Activated CD4-positive, alpha-beta memory T cell treated with anti-CD3 and anti-CD28 coated beads, Interleukin-2, amount 10 ng/mL, durations not matched to agents 7 days and 5 days (primary cell): ENCODE measurements at regions of chr14 and their contacts with region 1.

Region 1: GRCh38 chr14:67359775-67360648 is at the starts of genes ATP6V1D and EIF2S1:
- DNase-seq: peak; percentile 100
- H3K4me3 Mint-ChIP-seq: peak within 1 kb of the TSS; percentile 99
- H3K27ac Mint-ChIP-seq: peak within 1 kb of the TSS; percentile 97
- H3K4me1 Mint-ChIP-seq: peaks cover 65% of the 10 kb centered on the region
- H3K27me3 Mint-ChIP-seq: no peaks in the 10 kb centered on the region
- total RNA-seq, gene ATP6V1D: 46.7 to 48.2 TPM
- total RNA-seq, gene EIF2S1: 120 to 129 TPM

Region 2: GRCh38 chr14:67345583-67345982 is 14.4 kb before region 1 on chr14:
- CTCF ChIA-PET with region 1: interaction called, 15 read pairs
- POLR2A ChIA-PET with region 1: interaction called, 11 read pairs
- DNase-seq: no peak
- H3K4me3 Mint-ChIP-seq: no peak overlapping the region
- H3K27ac Mint-ChIP-seq: no peak overlapping the region
- H3K4me1 Mint-ChIP-seq: peaks cover 11% of the 10 kb centered on the region
- H3K27me3 Mint-ChIP-seq: no peaks in the 10 kb centered on the region

Region 3: GRCh38 chr14:67373347-67373746 is 13.3 kb after region 1 on chr14:
- CTCF ChIA-PET with region 1: interaction called, 10 read pairs
- POLR2A ChIA-PET with region 1: interaction called, 8 read pairs
- DNase-seq: no peak
- H3K4me3 Mint-ChIP-seq: no peak overlapping the region
- H3K27ac Mint-ChIP-seq: peak overlapping the region; percentile 21
- H3K4me1 Mint-ChIP-seq: peaks cover 27% of the 10 kb centered on the region
- H3K27me3 Mint-ChIP-seq: no peaks in the 10 kb centered on the region

Region 4: GRCh38 chr14:67385110-67385509 is 25.1 kb after region 1 on chr14:
- CTCF ChIA-PET with region 1: interaction called, 10 read pairs
- POLR2A ChIA-PET with region 1: interaction called, 5 read pairs
- DNase-seq: no peak
- H3K4me3 Mint-ChIP-seq: no peak overlapping the region
- H3K27ac Mint-ChIP-seq: no peak overlapping the region
- H3K4me1 Mint-ChIP-seq: no peaks in the 10 kb centered on the region
- H3K27me3 Mint-ChIP-seq: no peaks in the 10 kb centered on the region